Body of pancreas (tissue), 4 donors: ENCODE measurements at regions of chr2 and their contacts with region 1.

Region 1: GRCh38 chr2:191051825-191052778 is 38.1 kb upstream of the STAT1 start:
- DNase-seq: peak in 1 of 4 donors; percentile 21
- ATAC-seq: peak; percentile 74
- H3K4me3 ChIP-seq: no peak overlapping the region
- H3K27ac ChIP-seq: no peak overlapping the region
- H3K4me1 ChIP-seq: peaks cover 7% of the 10 kb centered on the region
- H3K27me3 ChIP-seq: no peaks in the 10 kb centered on the region
- CTCF ChIP-seq: peak; percentile 41 to 77 (median 70)
- POLR2A ChIP-seq: no peak

Region 2: GRCh38 chr2:190791347-190791975 is 260.6 kb before region 1 on chr2:
- intact Hi-C with region 1: no loop called
- DNase-seq: peak in 1 of 4 donors; percentile 16
- ATAC-seq: peak; percentile 47
- H3K4me3 ChIP-seq: no peak overlapping the region
- H3K27ac ChIP-seq: no peak overlapping the region
- H3K4me1 ChIP-seq: peaks cover 11% of the 10 kb centered on the region
- H3K27me3 ChIP-seq: no peaks in the 10 kb centered on the region
- CTCF ChIP-seq: no peak
- POLR2A ChIP-seq: no peak

Region 3: DNA sequence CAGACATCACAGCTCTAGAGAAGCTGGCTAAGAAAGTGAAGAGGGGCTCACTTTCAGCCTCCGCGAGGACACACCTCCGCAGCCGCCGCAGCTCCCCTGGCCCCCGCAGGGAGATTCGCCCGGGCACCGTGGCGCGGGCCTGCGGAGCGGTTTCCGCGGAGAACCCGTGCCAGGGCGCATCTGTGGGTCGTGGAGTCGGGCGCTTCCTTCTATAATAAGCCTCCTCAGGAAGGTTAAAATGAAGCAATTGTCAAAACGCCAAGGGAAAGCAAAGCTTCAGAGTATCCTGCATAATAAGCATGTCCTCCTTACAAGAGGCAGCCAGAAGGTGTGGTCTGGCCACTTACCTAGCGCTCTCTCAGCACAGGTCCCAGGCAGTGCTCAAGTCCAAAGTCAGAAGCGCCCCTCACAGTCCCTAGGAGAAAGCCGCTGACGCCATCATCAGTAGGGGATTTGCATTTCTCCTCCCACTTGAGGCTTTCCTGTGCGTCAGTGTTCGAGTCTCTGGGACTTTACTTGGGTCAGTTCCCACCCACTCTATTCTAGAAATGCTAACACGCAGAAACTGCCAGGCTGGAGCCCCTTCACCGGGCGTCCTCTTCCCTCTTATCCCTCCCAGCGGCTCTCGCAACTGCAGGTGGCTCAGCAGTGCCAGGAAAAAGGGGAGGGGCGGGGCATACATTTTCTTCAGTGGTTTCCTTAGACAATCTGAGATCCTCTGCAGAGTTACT is 98.7 kb after region 1 on chr2 and contains the start of gene STAT4:
- intact Hi-C with region 1: loop called (anchors 5 kb)
- DNase-seq: peak; percentile 34 to 67 (median 54)
- ATAC-seq: peak; percentile 76
- H3K4me3 ChIP-seq: peak within 1 kb of the TSS; percentile 3 to 6
- H3K27ac ChIP-seq: peak within 1 kb of the TSS in 3 of 4 donors; percentile 49 to 62 (median 60)
- H3K4me1 ChIP-seq: peaks cover 13% of the 10 kb centered on the region
- H3K27me3 ChIP-seq: no peaks in the 10 kb centered on the region
- CTCF ChIP-seq: no peak
- POLR2A ChIP-seq: peak in 2 of 3 donors; percentile 40 to 57
- total RNA-seq, gene STAT4: 0.52 to 2.6 TPM